ENCODE measurements at regions of chr10 and their contacts with region 1.

Region 1: GRCh38 chr10:52215745-52216361 is 98.2 kb upstream of the DKK1 start:
- DNase-seq: no peak
- H3K4me3 ChIP-seq: no peak overlapping the region
- H3K27ac ChIP-seq: no peak overlapping the region
- H3K4me1 ChIP-seq: peaks cover 0 to 11% (median 0%) of the 10 kb centered on the region in 4 donors
- H3K27me3 ChIP-seq: no peaks in the 10 kb centered on the region
- CTCF ChIP-seq: peak; percentile 72 to 79 (median 74)
- EP300 ChIP-seq: no peak
- POLR2A ChIP-seq: no peak

Region 2: DNA sequence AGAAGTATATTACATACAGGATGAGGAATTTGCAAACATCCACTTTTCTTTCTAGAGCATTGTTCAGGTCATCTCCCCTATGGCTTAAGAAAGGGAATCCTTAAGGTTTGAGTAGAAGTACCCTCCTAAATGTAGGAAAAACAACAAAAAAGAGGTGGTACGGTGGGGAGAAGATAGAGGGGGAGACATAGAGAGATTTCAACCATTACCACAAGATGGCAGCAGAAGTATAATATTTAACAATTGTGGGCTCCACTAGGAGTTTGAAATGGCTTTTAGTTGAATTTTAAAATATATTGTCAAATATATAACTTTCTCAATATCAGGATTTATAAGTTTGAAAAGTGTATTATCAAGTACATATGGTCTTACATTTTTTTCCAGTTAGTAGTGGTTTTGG is 1214.3 kb before region 1 on chr10:
- intact Hi-C with region 1: loop called (anchors 5 kb)
- DNase-seq: no peak
- H3K4me3 ChIP-seq: no peak overlapping the region
- H3K27ac ChIP-seq: no peak overlapping the region
- H3K4me1 ChIP-seq: peaks cover 0 to 11% (median 2%) of the 10 kb centered on the region in 4 donors
- H3K27me3 ChIP-seq: no peaks in the 10 kb centered on the region
- CTCF ChIP-seq: peak; percentile 51 to 67 (median 64)
- EP300 ChIP-seq: no peak
- POLR2A ChIP-seq: no peak

Region 3: DNA sequence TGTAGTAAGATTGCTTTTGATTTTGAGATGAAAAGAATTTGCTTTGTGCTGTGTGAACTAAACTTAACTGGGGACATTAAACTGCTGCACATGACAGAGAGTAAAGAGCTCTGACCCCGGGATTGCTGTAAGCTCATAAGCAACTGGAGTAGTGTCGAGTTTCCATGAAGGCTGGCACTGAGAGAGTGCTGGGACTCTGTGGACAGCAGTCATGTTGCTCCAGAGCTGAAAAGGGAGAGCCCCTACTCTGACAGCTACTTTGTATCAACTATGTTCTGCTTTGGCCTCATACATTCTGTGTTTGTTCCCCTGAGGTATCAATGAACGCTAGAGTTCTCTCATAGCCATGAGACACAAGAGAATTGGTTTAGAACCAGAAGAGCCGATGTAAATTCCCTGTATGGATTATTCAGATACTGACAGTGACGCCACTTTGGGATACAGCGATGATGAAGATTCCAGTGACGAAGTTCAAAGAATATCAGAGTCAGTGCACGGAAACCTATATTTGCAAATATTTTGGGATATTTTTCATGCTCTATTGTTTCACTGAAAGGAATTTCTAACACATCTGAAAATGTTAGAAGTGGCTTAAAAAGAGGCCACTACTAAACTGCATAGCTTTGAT is 87.7 kb before region 1 on chr10:
- intact Hi-C with region 1: no loop called
- DNase-seq: no peak
- H3K4me3 ChIP-seq: no peak overlapping the region
- H3K27ac ChIP-seq: no peak overlapping the region
- H3K4me1 ChIP-seq: no peaks in the 10 kb centered on the region
- H3K27me3 ChIP-seq: no peaks in the 10 kb centered on the region
- CTCF ChIP-seq: no peak
- EP300 ChIP-seq: no peak
- POLR2A ChIP-seq: no peak

Region 4: DNA sequence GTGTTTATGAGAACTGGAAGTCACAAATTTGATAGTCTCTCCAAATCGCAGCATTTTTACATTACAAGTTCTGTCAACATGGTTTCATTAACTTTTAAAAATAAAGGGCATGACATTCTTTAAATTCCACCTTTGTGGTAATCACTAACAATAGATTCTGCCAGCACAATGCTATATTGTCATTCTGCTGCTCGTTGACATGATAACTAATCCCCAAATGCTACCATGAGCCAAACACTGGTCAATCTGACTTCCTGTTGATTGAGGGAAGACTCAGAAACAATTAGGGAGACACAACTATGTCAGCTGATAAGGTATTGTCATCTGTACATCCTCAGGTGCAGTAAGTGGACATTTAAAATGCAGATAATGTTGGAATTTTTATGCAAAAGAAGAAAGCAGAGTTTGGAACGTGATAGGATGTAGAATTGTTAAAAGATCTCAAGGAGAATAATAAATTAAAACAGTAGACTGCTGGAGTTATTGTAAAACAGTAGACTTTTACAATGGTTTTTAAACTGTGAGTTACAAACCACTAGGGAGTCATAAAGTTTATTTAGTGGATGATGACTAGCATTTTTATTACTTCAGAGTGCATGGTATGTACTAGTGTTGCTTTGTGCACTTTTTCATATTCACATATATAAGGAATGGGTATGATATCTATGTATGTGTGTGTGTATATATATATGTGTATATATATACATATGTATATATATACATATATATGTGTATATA is 28.2 kb before region 1 on chr10:
- intact Hi-C with region 1: no loop called
- DNase-seq: no peak
- H3K4me3 ChIP-seq: no peak overlapping the region
- H3K27ac ChIP-seq: no peak overlapping the region
- H3K4me1 ChIP-seq: no peaks in the 10 kb centered on the region
- H3K27me3 ChIP-seq: no peaks in the 10 kb centered on the region
- CTCF ChIP-seq: no peak
- EP300 ChIP-seq: no peak
- POLR2A ChIP-seq: no peak